ENCODE measurements at regions of chr16 and their contacts with region 1.

Region 1: GRCh38 chr16:31179747-31180459 is at the start of gene FUS:
- DNase-seq: peak; percentile 95
- ATAC-seq: peak; percentile 89
- total RNA-seq, gene FUS: 79.3 TPM

Region 2: DNA sequence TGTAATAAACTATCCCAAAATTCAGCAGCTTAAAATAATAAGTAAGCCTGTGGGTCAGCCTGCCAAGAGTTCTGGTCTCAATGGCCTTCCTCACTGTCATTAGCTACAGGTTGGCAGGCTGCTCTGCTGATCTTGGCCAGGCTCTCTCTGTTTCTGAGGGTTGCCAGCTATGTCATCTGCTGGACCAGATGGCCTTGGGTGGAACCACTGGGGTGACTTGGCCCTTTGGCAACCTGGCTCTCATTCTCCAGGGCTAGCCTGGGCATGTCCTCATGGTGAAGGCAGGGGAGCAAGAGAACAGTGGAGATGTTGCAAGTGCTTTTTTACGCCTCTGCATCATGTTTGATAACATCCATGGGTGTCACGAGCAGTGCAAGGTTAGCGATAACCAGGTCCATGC is 93.8 kb after region 1 on chr16:
- intact Hi-C with region 1: no loop called
- DNase-seq: no peak
- ATAC-seq: no peak

Region 3: DNA sequence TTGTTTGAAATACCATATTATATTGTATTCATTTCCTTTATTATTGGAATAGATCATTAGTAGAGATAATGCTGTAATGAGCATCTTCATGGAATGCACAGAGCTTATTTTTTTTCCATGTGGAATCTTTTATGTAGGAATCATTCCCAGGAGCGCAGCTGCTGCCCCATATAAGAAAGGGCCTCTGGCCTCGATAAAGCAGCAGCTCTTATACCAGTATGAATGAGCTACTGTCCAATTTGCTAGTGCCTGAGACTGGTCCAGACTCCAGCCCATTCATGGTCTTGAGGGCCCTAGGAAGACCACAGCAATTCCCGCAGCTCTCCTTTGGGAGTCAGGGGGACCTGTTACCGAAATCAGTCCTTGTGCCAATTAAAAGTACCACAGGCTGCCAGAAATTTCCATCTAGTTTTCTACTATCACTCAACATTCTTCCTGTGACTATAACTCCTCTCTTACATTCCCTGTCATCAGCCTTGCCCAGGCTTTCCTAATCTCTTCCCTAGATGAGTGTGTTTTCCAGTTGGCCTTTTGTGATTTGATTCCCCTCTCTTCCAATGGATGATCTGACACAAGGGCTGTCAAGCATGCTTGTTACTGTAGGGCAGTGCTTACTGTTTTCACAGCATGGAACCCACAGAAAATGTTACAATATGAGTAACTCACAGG is 260.7 kb after region 1 on chr16:
- intact Hi-C with region 1: loop called (anchors 10 kb)
- DNase-seq: no peak
- ATAC-seq: no peak

Region 4: GRCh38 chr16:31542763-31543162 is 362.9 kb after region 1 on chr16:
- intact Hi-C with region 1: no loop called
- DNase-seq: no peak
- ATAC-seq: no peak